ENCODE measurements at regions of chr14 and their contacts with region 1.

Region 1: GRCh38 chr14:106538201-106538600 is 1011.8 kb downstream of the TMEM121 start:
- DNase-seq: no peak
- H3K4me3 Mint-ChIP-seq: no peak overlapping the region
- H3K27ac Mint-ChIP-seq: no peak overlapping the region
- H3K4me1 Mint-ChIP-seq: no peaks in the 10 kb centered on the region
- H3K27me3 Mint-ChIP-seq: peaks cover 21% of the 10 kb centered on the region

Region 2: GRCh38 chr14:106556665-106557289 is 18.6 kb after region 1 on chr14:
- CTCF ChIA-PET with region 1: interaction called, 47 read pairs
- POLR2A ChIA-PET with region 1: no interaction called
- intact Hi-C with region 1: no loop called
- DNase-seq: peak; percentile 84
- H3K4me3 Mint-ChIP-seq: no peak overlapping the region
- H3K27ac Mint-ChIP-seq: no peak overlapping the region
- H3K4me1 Mint-ChIP-seq: no peaks in the 10 kb centered on the region
- H3K27me3 Mint-ChIP-seq: peaks cover 18% of the 10 kb centered on the region

Measured in activated CD4-positive, alpha-beta memory T cell treated with anti-CD3 and anti-CD28 coated beads for 36 hours (primary cell).